ENCODE measurements at regions of chr15 and their contacts with region 1.

Region 1: DNA sequence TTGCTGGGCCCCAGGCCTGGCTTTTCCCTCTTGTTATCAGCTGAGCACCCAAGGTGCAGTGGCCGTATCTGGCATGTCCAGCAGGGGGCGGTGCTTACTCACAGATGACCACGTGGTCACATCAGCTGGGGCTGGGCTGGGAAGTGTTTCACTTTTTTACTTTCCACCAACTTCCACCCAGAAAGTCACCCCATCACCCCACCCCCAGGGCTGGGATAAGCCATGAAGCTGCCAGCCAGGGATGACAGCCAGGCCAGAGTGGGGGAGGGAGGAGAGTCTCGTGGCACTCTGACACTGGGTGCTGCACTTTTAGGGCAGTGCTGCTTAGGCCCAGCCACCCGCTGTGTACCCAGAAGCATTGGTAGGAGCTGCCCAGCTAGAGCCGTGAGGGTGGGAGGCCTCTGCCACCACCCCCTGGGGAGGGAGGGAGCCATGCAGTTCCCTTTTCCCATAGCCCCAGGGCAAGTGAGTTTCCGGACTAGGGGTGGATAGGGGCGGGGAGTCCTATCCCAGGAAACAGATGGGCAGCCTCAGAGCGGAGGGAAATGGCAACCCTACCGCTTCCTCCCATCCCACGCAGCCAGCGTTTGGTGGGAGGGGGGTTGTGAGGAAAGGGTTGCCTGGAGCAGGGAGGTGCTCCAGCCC is 6.1 kb downstream of the PPCDC start:
- DNase-seq: peak; percentile 87
- H3K4me3 ChIP-seq: no peak overlapping the region; a peak in 1 of 4 replicates
- H3K27ac ChIP-seq: no peak overlapping the region; a peak in 1 of 4 replicates
- H3K4me1 ChIP-seq: peaks cover 7 to 10% of the 10 kb centered on the region in 2 experiments; a peak in 3 of 4 replicates
- H3K27me3 ChIP-seq: no peaks in the 10 kb centered on the region
- CTCF ChIP-seq: peak; percentile 90
- EP300 ChIP-seq: no peak
- RAD21 ChIP-seq: peak; percentile 96

Region 2: DNA sequence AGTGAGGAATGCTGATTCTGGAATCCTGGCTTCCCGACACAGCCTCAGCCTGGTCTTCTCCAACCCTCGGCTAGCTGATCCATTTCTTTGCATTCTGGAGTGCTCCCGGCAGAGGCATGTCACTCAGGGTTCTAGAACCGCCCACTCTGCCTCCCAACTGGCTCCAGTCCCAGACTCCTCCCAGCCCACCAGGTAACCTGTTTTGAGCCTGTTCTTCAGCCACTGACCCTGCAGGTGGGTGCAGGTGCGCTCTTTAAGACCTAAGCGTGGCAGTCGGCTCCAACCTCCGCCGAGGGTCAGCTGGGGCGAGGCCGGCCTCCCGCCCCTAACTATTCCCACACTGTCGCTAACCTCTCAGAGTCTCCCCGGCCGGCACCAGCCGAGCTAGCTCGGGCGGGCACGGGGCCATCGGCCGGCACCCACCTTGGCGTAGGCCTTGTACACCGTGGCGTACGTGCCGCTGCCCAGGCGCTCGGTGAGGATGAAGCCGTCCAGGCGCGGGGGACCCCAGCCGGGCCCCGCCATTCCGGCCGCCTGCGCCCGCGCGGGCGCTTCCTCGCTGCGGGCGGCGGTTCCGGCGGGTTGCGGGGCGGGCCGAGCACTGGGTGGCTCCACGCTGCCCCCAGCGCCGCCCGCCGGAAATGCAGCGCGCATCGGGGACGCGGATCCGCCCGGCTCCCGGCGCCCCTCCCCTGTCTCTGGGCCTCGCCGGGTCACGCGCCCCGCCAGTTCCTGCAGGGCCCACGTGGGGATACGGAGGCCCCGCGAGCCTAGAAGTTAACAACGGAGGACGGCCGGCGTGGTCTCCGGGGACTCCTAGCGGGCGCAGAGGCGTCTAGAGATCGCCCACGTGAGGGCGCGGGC is 186.7 kb before region 1 on chr15 and contains the start of gene ULK3:
- CTCF ChIA-PET with region 1: no interaction called
- POLR2A ChIA-PET with region 1: no interaction called
- DNase-seq: peak; percentile 99
- H3K4me3 ChIP-seq: peak within 1 kb of the TSS; percentile 98
- H3K27ac ChIP-seq: peak within 1 kb of the TSS; percentile 72 to 88
- H3K4me1 ChIP-seq: peaks cover 0 to 23% of the 10 kb centered on the region in 2 experiments; a peak in 2 of 4 replicates
- H3K27me3 ChIP-seq: no peaks in the 10 kb centered on the region
- CTCF ChIP-seq: peak; percentile 50
- EP300 ChIP-seq: no peak
- RAD21 ChIP-seq: peak; percentile 34; the same call in 1 of the 2 replicates
- polyA plus RNA-seq, gene ULK3: 41.3 and 55.3 TPM in 2 replicates

Region 3: GRCh38 chr15:74967670-74968069 is 61.8 kb before region 1 on chr15:
- CTCF ChIA-PET with region 1: no interaction called
- POLR2A ChIA-PET with region 1: no interaction called
- DNase-seq: no peak
- H3K4me3 ChIP-seq: no peak overlapping the region
- H3K27ac ChIP-seq: no peak overlapping the region
- H3K4me1 ChIP-seq: peaks cover 7% of the 10 kb centered on the region in 2 experiments; a peak in 2 of 4 replicates
- H3K27me3 ChIP-seq: no peaks in the 10 kb centered on the region
- CTCF ChIP-seq: no peak
- EP300 ChIP-seq: no peak
- RAD21 ChIP-seq: no peak

Region 4: GRCh38 chr15:75192307-75192706 is 162.8 kb after region 1 on chr15:
- CTCF ChIA-PET with region 1: interaction called, 15 read pairs
- POLR2A ChIA-PET with region 1: no interaction called
- DNase-seq: no peak
- H3K4me3 ChIP-seq: no peak overlapping the region
- H3K27ac ChIP-seq: no peak overlapping the region
- H3K4me1 ChIP-seq: peaks cover 0 to 32% of the 10 kb centered on the region in 2 experiments; a peak in 1 of 4 replicates
- H3K27me3 ChIP-seq: no peaks in the 10 kb centered on the region
- CTCF ChIP-seq: no peak
- EP300 ChIP-seq: no peak
- RAD21 ChIP-seq: no peak

Region 5: GRCh38 chr15:75215107-75216004 is 185.9 kb after region 1 on chr15:
- CTCF ChIA-PET with region 1: interaction called, 238 read pairs
- POLR2A ChIA-PET with region 1: no interaction called
- DNase-seq: no peak
- H3K4me3 ChIP-seq: no peak overlapping the region
- H3K27ac ChIP-seq: no peak overlapping the region
- H3K4me1 ChIP-seq: no peaks in the 10 kb centered on the region; a peak in 1 of 4 replicates
- H3K27me3 ChIP-seq: no peaks in the 10 kb centered on the region
- CTCF ChIP-seq: no peak
- EP300 ChIP-seq: no peak
- RAD21 ChIP-seq: no peak

Measured in SK-N-SH (cell line).